H1 (cell line): ENCODE measurements at regions of chr2 and their contacts with region 1.

Region 1: DNA sequence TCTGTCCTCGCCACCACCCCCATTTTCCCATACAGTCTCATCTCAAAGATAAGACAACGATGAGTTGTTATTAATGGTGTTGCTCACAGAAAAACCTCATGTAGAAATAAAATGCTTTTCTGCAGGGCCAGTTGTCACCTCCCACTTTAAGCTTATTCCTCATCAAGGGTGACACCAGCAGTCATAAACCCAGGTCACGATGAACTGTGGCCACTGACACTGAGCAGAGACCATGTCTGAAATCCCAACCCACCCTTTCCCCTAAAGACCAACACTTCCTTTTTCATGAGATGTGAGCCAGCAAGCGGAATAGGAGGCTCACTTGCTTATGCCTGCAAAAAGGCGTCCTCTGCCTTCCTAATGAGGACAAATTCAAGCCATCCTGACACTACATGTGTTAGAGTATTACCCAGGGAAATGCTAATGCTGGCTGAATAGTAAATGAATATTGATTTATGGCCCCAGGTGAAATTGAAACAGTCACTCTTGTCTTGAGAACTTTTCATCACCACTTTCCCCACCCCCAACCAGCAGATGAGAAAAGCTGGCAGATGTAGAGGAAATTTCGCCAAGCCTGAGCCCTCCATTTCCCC is 228.4 kb downstream of the MGAT5 start:
- DNase-seq: no peak
- H3K4me3 ChIP-seq: no peak overlapping the region
- H3K27ac ChIP-seq: no peak overlapping the region
- H3K4me1 ChIP-seq: no peaks in the 10 kb centered on the region
- H3K27me3 ChIP-seq: no peaks in the 10 kb centered on the region; a peak in 1 of 7 replicates
- CTCF ChIP-seq: no peak
- EP300 ChIP-seq: no peak
- POLR2A ChIP-seq: no peak
- RAD21 ChIP-seq: no peak

Region 2: DNA sequence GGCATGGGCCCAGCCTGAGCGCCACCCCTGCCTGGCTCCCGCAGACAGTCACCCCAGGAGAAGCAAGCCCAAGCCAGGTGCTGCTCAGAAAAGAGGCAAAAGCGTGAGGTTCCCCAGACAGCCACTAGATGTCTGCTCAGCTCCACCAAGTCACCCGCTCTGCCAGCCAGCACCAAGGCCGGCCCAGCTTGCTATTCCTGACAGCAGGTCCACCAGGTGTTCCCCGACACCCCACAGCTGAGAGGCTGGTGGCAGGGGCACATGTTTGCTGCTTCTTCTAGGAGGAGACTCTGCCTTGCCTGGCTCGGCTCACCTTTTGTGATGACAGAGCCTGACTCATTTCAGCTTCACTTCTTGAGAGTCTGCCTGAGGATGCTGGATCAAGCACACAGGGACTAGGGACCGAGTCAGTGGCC is 21.6 kb before region 1 on chr2:
- CTCF ChIA-PET with region 1: interaction called, 13 read pairs
- POLR2A ChIA-PET with region 1: no interaction called
- DNase-seq: peak; percentile 69 to 80
- H3K4me3 ChIP-seq: no peak overlapping the region
- H3K27ac ChIP-seq: no peak overlapping the region
- H3K4me1 ChIP-seq: peaks cover 0 to 4% (median 0%) of the 10 kb centered on the region in 4 experiments; a peak in 3 of 7 replicates
- H3K27me3 ChIP-seq: no peaks in the 10 kb centered on the region
- CTCF ChIP-seq: peak in 2 of 3 experiments; percentile 91 to 95; a peak in 3 of 4 replicates
- EP300 ChIP-seq: no peak
- POLR2A ChIP-seq: no peak
- RAD21 ChIP-seq: peak; percentile 97 to 99